GM13977 (cell line): ENCODE measurements at regions of chr6 and their contacts with region 1.

Region 1: DNA sequence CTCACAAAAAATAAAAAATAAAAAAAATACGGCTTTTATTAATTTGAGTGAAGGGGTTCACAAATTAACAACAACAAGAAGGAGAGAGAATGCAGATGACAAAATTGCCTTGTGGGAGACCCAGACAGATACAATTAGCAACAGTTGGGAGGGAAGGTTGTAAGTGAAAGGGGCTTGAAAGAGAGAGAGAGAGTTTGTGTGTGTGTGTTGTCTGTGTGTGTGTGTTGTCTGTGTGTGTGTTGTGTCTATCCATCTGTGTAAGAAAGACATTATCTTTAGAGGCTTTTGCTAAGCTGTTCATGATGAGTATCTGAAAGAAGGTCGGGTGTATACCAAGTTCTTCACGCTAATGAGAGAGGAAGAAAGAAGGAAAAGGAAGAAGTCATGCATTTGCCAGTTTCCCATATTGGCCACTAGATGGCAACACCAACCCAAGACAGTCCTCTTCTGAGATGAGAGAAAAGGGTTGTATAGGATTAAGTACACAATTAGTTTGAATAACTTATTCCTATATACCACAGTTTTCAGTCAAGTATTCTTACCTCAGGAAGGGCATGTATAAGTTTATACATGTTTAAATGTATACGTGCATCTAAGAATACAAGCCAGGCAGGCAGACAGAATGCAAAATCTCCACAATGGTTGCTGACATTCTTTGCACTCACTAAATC is 63.7 kb upstream of the CD2AP start:
- DNase-seq: peak; percentile 58
- CTCF ChIP-seq: peak; percentile 79

Region 2: DNA sequence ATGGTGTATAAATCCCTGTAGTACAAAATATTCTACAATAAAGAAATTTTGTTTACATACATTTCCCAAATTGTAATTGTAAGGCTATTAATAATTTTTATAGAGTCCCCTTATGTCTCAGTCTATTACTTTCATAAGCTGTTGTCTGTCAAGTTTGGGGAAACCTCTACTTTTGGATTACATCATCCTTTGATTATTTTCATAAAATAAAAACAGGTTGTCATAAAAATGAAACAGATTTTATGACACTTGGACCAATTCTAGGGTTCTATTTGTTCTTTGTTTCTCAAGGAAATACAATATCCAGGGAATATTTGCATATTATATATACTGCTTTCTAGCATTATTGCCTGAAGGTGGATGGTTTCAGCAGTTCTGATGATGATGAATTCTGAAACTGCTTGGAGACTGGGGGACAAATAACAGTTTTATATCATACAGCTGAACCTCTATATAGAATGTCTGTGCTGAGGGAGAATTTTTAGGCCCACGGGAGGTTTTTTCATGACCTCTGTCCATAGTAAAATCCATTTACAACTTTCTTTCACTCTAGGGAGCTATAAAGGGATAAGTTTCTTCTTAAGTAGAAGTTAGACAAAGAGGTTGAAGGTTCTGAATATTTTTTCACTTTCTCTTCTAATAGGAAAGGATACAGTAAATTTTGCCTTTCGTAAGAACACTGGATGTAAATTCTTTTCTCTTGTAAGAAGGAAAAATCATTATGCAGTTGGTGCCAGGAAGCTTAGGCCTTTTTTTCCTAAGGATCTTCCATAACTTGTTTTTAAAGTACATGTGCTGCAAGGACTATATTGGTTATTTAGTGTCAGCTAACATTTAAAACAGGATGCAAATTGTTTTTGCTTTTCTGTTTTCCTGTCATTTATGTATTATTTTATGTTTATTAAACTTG is 121.7 kb after region 1 on chr6:
- in situ Hi-C with region 1: no loop called
- DNase-seq: no peak
- CTCF ChIP-seq: no peak

Region 3: DNA sequence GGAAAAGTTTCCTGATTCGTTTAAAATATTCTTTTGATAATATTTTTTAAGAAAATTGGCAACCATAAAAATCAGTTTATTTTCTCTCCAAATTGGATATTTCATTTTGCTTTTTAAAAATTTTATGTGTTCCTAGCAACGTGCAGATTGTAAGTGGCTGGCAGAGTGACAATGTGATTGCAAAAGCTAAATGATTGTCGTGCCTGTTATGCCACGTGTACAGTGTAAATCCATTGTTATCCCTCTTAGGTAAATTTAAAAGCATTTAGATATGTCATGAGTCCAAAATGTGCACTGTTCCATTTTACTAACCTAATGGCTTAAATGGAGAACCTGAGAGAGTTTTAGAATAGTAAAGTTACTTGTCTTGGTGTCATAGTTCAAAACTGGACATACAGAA is 190.1 kb after region 1 on chr6:
- in situ Hi-C with region 1: loop called (anchors 25 kb)
- DNase-seq: no peak
- CTCF ChIP-seq: no peak

Region 4: GRCh38 chr6:47733879-47734558 is 320.1 kb after region 1 on chr6:
- in situ Hi-C with region 1: loop called (anchors 25 kb)
- DNase-seq: peak; percentile 36
- CTCF ChIP-seq: peak; percentile 67